T-cell (primary cell): ENCODE measurements at regions of chr1 and their contacts with region 1.

Region 1: DNA sequence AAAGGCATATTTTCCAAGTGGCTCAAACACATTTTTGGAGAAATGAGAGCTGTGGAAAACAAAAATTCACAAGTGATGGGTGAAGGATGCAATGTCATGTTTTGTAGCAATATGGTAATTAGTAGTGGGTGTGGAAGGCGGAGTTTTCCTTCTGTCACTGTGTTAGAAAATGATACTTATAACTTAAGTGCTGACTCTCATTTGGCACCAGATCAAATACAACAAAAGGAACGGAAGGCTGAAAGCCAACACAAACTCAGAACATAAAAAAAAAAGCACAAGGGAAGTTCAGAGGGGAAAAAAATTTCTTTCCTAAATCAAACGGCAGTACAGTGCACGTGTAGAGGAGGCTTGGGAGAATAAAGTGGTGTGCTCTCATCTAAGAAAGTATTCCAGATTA is at the start of gene TNFSF18:
- DNase-seq: no peak
- ATAC-seq: no peak
- H3K4me3 ChIP-seq: no peak within 1 kb of the TSS
- H3K4me3 Mint-ChIP-seq: no peak within 1 kb of the TSS
- H3K27ac ChIP-seq: no peak within 1 kb of the TSS
- H3K27ac Mint-ChIP-seq: peak within 1 kb of the TSS in 1 of 2 donors; percentile 30
- H3K4me1 ChIP-seq: no peaks in the 10 kb centered on the region
- H3K4me1 Mint-ChIP-seq: peaks cover 5 to 9% (median 6%) of the 10 kb centered on the region in 3 donors
- H3K27me3 ChIP-seq: no peaks in the 10 kb centered on the region
- H3K27me3 Mint-ChIP-seq: no peaks in the 10 kb centered on the region
- total RNA-seq, gene TNFSF18: not detected

Region 2: GRCh38 chr1:172826096-172826743 is 224.6 kb before region 1 on chr1:
- CTCF ChIA-PET with region 1: no interaction called
- POLR2A ChIA-PET with region 1: no interaction called
- DNase-seq: peak in 1 of 35 experiments; percentile 38
- ATAC-seq: peak in 3 of 4 experiments; percentile 15 to 58 (median 39)
- H3K4me3 ChIP-seq: no peak overlapping the region
- H3K4me3 Mint-ChIP-seq: no peak overlapping the region
- H3K27ac ChIP-seq: no peak overlapping the region
- H3K27ac Mint-ChIP-seq: no peak overlapping the region
- H3K4me1 ChIP-seq: no peaks in the 10 kb centered on the region
- H3K4me1 Mint-ChIP-seq: peaks cover 0 to 5% (median 0%) of the 10 kb centered on the region in 3 donors
- H3K27me3 ChIP-seq: no peaks in the 10 kb centered on the region
- H3K27me3 Mint-ChIP-seq: no peaks in the 10 kb centered on the region

Region 3: DNA sequence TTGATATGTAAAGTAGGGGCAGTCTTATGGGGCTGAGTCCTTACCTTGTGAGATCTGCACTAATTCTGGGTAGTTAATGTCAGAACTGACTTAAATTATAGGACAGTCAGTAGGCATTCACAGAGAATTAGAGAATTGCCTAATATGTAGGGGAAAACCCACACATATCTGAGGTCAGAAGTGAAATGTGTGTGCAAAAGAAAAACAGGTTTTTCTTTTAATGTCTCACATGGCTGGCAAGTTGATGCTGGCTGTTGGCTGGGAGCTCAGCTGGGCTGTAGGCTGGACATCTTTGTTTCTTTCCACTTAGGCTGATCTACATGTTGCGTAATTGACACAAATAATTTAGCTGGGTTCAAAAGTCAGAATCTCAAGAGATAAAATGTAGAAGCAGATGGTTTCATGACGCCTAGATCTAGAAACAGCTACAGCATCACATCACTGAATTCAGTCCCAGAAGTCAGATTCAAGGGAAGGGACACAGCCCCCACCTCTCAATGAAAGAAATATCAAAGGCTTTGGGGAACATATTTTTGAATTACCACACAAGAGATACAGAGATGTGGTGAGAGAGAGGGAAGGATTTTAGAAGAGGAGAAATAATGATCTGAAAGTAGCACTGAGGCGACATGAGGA is 99.0 kb before region 1 on chr1:
- CTCF ChIA-PET with region 1: no interaction called
- POLR2A ChIA-PET with region 1: no interaction called
- DNase-seq: no peak
- ATAC-seq: no peak
- H3K4me3 ChIP-seq: no peak overlapping the region
- H3K4me3 Mint-ChIP-seq: no peak overlapping the region
- H3K27ac ChIP-seq: no peak overlapping the region
- H3K27ac Mint-ChIP-seq: no peak overlapping the region
- H3K4me1 ChIP-seq: no peaks in the 10 kb centered on the region
- H3K4me1 Mint-ChIP-seq: peaks cover 13 to 24% (median 17%) of the 10 kb centered on the region in 3 donors
- H3K27me3 ChIP-seq: no peaks in the 10 kb centered on the region
- H3K27me3 Mint-ChIP-seq: no peaks in the 10 kb centered on the region

Region 4: GRCh38 chr1:173100476-173101107 is 49.7 kb after region 1 on chr1:
- CTCF ChIA-PET with region 1: no interaction called
- POLR2A ChIA-PET with region 1: interaction called in 1 of 2 experiments, 12 read pairs
- DNase-seq: no peak
- ATAC-seq: no peak
- H3K4me3 ChIP-seq: no peak overlapping the region
- H3K4me3 Mint-ChIP-seq: no peak overlapping the region
- H3K27ac ChIP-seq: no peak overlapping the region
- H3K27ac Mint-ChIP-seq: no peak overlapping the region
- H3K4me1 ChIP-seq: no peaks in the 10 kb centered on the region
- H3K4me1 Mint-ChIP-seq: no peaks in the 10 kb centered on the region
- H3K27me3 ChIP-seq: no peaks in the 10 kb centered on the region
- H3K27me3 Mint-ChIP-seq: no peaks in the 10 kb centered on the region